CD4-positive, alpha-beta memory T cell (primary cell): ENCODE measurements at regions of chr1 and their contacts with region 1.

Region 1: DNA sequence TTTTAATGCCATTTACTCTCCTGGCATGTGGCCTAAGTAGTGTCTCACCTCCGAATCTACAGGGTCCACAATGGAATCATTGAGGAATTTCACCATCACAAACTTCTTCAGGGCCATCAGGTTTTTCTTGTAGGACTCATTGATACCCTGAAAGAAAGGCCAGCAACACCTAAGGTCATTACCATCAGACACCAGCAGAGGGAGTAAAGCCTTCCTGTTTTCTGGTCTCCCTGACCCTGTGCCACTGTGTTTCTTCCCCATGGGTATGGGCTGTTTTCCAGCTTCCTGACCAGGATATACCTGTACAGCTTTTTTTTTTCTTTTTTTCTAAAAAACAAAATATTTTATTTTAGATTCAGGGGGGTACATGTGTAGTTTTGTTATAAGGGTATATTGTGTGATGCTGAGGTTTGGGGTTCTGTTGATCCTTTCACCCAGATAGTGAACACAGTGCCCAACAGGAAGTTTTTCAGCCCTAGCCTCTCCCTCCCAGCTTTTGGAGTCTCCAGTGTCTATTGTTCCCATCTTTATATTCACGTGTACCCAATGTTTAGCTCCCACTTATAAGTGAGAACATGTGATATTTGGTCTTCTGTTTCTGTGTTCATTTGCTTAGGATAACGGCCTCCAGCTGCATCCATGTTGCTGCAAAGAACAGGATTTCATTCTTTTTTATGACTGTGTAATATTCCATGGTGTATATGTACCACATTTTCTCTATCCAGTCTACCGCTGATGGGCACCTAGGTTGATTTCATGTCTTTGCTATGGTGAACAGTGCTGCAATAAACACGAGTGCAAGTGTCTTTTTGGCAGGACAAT is 18.3 kb downstream of the PPT1 start:
- DNase-seq: peak; percentile 41 to 64 (median 45)
- H3K4me3 ChIP-seq: no peak overlapping the region
- H3K4me3 Mint-ChIP-seq: no peak overlapping the region
- H3K27ac ChIP-seq: no peak overlapping the region
- H3K27ac Mint-ChIP-seq: peak overlapping the region in 5 of 7 donors; percentile 12 to 81 (median 70)
- H3K4me1 ChIP-seq: peaks cover 1% of the 10 kb centered on the region
- H3K4me1 Mint-ChIP-seq: peaks cover 2 to 11% (median 3%) of the 10 kb centered on the region in 4 donors
- H3K27me3 ChIP-seq: no peaks in the 10 kb centered on the region
- H3K27me3 Mint-ChIP-seq: no peaks in the 10 kb centered on the region

Region 2: GRCh38 chr1:40059338-40059959 is 19.3 kb before region 1 on chr1:
- CTCF ChIA-PET with region 1: interaction called, 27 read pairs
- POLR2A ChIA-PET with region 1: interaction called, 11 read pairs
- intact Hi-C with region 1: no loop called
- DNase-seq: peak; percentile 52 to 58 (median 55)
- H3K4me3 ChIP-seq: peak overlapping the region in 1 of 2 donors; percentile 32
- H3K4me3 Mint-ChIP-seq: peak overlapping the region; percentile 58 to 82 (median 79)
- H3K27ac ChIP-seq: peak overlapping the region; percentile 63
- H3K27ac Mint-ChIP-seq: peak overlapping the region; percentile 82 to 95 (median 89)
- H3K4me1 ChIP-seq: peaks cover 90% of the 10 kb centered on the region
- H3K4me1 Mint-ChIP-seq: peaks cover 77 to 92% (median 83%) of the 10 kb centered on the region in 4 donors
- H3K27me3 ChIP-seq: no peaks in the 10 kb centered on the region
- H3K27me3 Mint-ChIP-seq: no peaks in the 10 kb centered on the region

Region 3: DNA sequence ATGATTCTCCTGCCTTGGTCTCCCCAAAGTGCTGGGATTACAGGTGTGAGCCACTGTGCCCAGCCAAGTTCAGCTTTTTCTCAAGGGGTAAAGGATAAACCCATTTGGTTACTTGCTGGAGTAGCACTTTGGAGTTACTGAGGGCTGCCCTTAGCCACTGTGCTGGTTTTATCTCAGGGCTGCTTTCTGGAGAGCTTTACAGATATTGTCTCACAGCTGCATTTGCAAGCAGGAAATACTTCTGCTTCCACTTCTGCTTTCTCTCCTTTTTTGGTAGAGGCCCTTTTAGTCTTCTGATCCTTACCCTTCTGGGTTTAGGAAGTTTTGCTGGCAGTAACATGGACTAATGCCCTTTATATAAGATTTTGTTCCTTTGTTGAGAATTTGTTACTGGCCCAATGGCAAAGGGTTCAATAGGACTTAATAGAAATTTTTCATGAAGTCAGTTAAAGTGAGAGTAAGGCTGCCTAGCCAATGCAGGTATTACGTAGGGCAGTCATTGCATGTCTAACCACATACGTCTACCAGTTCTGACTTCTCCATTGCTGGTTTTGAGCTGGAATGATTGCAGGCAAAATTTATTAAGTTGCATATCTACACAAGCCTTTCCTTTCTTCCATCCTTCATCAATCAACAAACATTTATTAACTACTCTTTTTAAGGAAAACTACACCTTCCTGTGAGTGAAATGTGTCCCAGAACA is 13.8 kb before region 1 on chr1:
- CTCF ChIA-PET with region 1: interaction called, 27 read pairs
- POLR2A ChIA-PET with region 1: interaction called, 11 read pairs
- intact Hi-C with region 1: no loop called
- DNase-seq: no peak
- H3K4me3 ChIP-seq: no peak overlapping the region
- H3K4me3 Mint-ChIP-seq: peak overlapping the region in 4 of 8 donors; percentile 30 to 63 (median 48)
- H3K27ac ChIP-seq: peak overlapping the region; percentile 27
- H3K27ac Mint-ChIP-seq: peak overlapping the region; percentile 77 to 96 (median 86)
- H3K4me1 ChIP-seq: peaks cover 45% of the 10 kb centered on the region
- H3K4me1 Mint-ChIP-seq: peaks cover 49 to 63% (median 54%) of the 10 kb centered on the region in 4 donors
- H3K27me3 ChIP-seq: no peaks in the 10 kb centered on the region
- H3K27me3 Mint-ChIP-seq: no peaks in the 10 kb centered on the region

Region 4: DNA sequence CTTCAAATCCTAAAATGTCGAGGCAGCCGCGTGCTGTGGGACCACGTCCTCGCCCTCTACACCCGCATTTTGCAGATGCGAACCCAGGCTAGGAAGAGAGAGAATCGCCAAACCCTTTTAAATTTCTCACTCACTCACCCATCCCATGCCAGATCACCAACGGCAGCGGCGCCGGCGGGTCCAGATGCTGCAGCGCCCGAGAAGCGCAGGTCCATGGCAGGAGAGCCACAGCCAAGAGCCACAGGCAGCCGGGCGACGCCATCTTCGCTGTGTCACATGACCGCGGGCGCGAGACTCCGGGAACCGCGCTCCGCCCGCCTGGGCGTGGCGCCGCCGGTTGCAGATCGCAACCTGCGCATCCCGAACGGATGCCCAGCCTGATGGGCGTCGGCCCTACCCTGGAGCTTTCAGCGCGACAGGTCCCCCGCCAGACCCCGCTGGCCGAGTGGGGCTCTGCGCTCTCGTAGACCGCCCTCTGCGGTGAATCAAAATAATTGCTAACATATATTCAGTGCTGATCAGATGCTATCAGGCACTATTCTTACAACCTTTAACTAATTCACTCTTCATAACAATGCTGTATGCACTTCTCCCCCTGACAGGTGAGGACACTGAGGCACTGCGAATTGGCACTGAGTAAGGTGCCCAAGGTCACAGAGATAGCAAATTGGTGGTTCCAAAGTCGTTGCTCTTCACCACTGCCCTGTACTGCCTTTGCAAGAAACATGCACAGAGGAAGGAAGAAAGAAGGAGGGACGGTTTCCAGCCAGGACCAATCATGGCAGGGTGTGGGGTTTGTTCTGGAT is 18.5 kb after region 1 on chr1 and contains the start of gene PPT1:
- CTCF ChIA-PET with region 1: interaction called, 20 read pairs
- POLR2A ChIA-PET with region 1: interaction called, 3 read pairs
- intact Hi-C with region 1: no loop called
- DNase-seq: peak; percentile 73 to 82 (median 79)
- H3K4me3 ChIP-seq: peak within 1 kb of the TSS; percentile 81 to 91
- H3K4me3 Mint-ChIP-seq: peak within 1 kb of the TSS; percentile 90 to 99 (median 96)
- H3K27ac ChIP-seq: peak within 1 kb of the TSS; percentile 47
- H3K27ac Mint-ChIP-seq: peak within 1 kb of the TSS; percentile 83 to 98 (median 97)
- H3K4me1 ChIP-seq: peaks cover 19% of the 10 kb centered on the region
- H3K4me1 Mint-ChIP-seq: peaks cover 33 to 40% (median 35%) of the 10 kb centered on the region in 4 donors
- H3K27me3 ChIP-seq: no peaks in the 10 kb centered on the region
- H3K27me3 Mint-ChIP-seq: peaks cover 0 to 7% of the 10 kb centered on the region in 2 donors
- total RNA-seq, gene PPT1: 56.7 to 64.8 TPM